B cell (primary cell): ENCODE measurements at regions of chr21 and their contacts with region 1.

Region 1: DNA sequence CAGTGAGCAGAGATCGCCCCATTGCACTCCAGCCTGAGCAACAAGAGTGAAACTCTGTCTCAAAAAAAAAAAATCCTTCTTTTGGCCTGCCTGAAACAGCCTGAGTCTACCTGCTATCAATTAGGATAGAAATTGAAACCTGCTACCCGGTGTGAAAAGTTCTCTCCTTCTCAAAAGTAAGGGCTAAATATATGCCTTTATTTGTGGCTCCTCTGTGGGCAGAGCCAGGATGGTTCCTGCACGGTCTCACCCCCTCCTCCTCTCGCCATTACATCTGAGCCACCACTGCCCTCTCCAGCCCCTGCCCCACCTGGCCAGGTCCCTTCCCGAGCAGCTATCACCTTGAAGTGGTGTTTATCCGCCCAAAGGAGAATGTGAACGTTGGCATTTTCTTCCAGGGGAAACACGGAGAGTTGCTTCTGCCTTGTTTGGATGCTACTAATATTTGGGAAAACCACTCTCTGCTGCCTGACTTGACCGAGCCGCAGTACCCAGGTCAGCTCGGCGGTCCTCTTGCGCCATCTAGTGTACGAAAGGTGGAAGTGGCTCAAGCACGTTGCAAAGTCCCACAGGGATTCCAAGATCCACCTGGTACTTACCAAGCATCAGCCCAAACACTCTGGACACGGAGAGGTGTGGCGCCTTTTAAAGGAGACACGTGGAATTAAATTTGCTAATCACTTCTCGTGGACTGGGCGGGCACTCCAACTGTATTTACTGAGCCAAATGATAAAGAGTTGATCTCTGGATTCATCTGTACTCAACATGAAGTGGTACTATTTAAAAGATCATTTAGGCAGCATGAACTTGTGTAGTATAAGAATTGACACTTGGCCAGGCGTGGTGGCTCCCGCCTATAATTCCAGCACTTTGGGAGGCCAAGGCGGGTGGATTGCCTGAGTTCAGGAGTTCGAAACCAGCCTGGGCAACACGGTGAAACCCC is 31.9 kb downstream of the SETD4 start:
- DNase-seq: peak; percentile 80
- ATAC-seq: peak; percentile 87
- H3K4me3 ChIP-seq: no peak overlapping the region
- H3K4me3 Mint-ChIP-seq: no peak overlapping the region
- H3K27ac ChIP-seq: no peak overlapping the region
- H3K27ac Mint-ChIP-seq: no peak overlapping the region
- H3K4me1 ChIP-seq: peaks cover 0 to 6% of the 10 kb centered on the region in 2 donors
- H3K4me1 Mint-ChIP-seq: peaks cover 5% of the 10 kb centered on the region
- H3K27me3 ChIP-seq: no peaks in the 10 kb centered on the region
- H3K27me3 Mint-ChIP-seq: no peaks in the 10 kb centered on the region
- CTCF ChIP-seq: peak; percentile 97

Region 2: GRCh38 chr21:34693192-34693810 is 1335.1 kb before region 1 on chr21:
- CTCF ChIA-PET with region 1: interaction called, 44 read pairs
- POLR2A ChIA-PET with region 1: no interaction called
- intact Hi-C with region 1: loop called (anchors 1 kb)
- DNase-seq: peak; percentile 70
- ATAC-seq: peak; percentile 43
- H3K4me3 ChIP-seq: no peak overlapping the region
- H3K4me3 Mint-ChIP-seq: no peak overlapping the region
- H3K27ac ChIP-seq: no peak overlapping the region
- H3K27ac Mint-ChIP-seq: no peak overlapping the region
- H3K4me1 ChIP-seq: no peaks in the 10 kb centered on the region
- H3K4me1 Mint-ChIP-seq: no peaks in the 10 kb centered on the region
- H3K27me3 ChIP-seq: peaks cover 0 to 9% (median 1%) of the 10 kb centered on the region in 4 experiments
- H3K27me3 Mint-ChIP-seq: peaks cover 20% of the 10 kb centered on the region
- CTCF ChIP-seq: peak; percentile 96

Region 3: DNA sequence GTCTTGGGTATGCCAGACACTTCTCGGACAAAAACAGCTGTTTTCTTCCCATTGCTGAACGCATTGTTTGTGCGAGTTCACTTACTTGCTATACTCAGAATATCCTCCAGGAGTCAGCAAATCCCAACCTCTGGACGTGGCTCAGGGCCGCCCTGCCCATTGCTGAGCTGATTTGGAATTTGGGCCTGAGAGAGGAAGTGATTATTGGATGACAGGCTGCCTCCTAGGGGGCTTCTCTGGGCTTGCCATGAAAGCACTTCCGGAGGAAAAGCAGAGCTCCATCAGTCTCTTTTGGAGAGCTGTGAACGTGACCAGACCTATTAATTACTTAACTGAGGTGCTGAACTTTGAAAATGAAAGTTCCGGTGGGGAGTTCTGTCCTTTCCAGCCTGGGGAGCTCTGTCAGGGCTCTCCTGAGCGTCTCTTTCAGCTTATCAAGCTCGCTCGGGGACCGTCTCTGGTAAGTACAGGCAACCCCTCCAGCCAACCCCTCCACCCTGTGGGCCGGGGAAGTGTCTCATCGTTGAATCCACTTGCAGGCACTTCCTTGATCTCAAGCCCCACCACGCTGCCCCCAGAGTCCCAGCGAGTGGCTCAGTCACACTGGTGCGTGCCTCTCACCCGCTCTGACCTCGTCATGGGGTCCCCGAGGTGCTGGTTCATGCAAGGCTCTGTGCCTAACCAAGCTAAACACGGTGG is 1282.7 kb before region 1 on chr21:
- CTCF ChIA-PET with region 1: interaction called, 58 read pairs
- POLR2A ChIA-PET with region 1: no interaction called
- intact Hi-C with region 1: no loop called
- DNase-seq: peak; percentile 76
- ATAC-seq: peak; percentile 89
- H3K4me3 ChIP-seq: peak overlapping the region in 3 of 5 experiments; percentile 14 to 41 (median 27)
- H3K4me3 Mint-ChIP-seq: peak overlapping the region; percentile 81
- H3K27ac ChIP-seq: no peak overlapping the region
- H3K27ac Mint-ChIP-seq: no peak overlapping the region
- H3K4me1 ChIP-seq: peaks cover 0 to 8% of the 10 kb centered on the region in 2 donors
- H3K4me1 Mint-ChIP-seq: peaks cover 4% of the 10 kb centered on the region
- H3K27me3 ChIP-seq: no peaks in the 10 kb centered on the region
- H3K27me3 Mint-ChIP-seq: peaks cover 25% of the 10 kb centered on the region
- CTCF ChIP-seq: peak; percentile 85

Region 4: GRCh38 chr21:34801519-34802132 is 1226.8 kb before region 1 on chr21:
- CTCF ChIA-PET with region 1: no interaction called
- POLR2A ChIA-PET with region 1: no interaction called
- intact Hi-C with region 1: loop called (anchors 5 kb)
- DNase-seq: peak; percentile 55
- ATAC-seq: peak; percentile 70
- H3K4me3 ChIP-seq: no peak overlapping the region
- H3K4me3 Mint-ChIP-seq: no peak overlapping the region
- H3K27ac ChIP-seq: peak overlapping the region in 1 of 2 donors; percentile 25
- H3K27ac Mint-ChIP-seq: no peak overlapping the region
- H3K4me1 ChIP-seq: no peaks in the 10 kb centered on the region
- H3K4me1 Mint-ChIP-seq: peaks cover 20% of the 10 kb centered on the region
- H3K27me3 ChIP-seq: no peaks in the 10 kb centered on the region
- H3K27me3 Mint-ChIP-seq: no peaks in the 10 kb centered on the region
- CTCF ChIP-seq: peak; percentile 68

Region 5: DNA sequence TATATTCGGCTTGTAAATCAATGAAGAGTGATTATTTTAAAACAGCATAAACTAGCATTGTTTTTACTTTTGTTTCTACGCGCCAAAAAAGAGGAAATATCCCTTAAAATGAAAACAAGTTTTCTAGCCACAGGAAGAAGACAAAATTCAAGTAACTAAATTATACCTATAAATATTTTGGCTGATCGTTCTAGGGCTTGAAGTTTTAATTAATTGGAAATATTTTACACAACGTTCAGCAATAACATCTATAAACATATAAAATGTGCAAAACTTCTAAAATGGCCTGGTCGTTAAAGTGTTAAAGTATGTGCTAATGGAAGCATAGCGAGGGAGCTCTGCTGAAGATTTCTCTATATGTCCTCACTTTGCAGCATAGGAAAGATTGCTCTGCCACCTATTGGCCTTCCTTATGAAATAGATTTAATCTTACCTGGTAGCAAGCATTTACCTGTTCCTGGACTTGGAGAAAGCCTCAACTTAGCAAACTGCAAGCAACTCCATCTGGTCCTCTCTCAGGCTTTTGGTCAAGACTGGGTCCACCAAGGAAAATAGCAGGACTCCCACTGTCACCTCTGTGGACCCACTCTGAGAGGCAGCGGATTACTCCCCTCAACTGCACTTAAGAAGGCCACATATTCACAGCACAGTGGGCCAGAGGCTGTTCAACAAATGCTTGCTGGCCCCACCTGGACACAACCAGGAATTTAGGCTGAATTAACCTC is 628.0 kb before region 1 on chr21:
- CTCF ChIA-PET with region 1: interaction called, 3 read pairs
- POLR2A ChIA-PET with region 1: no interaction called
- intact Hi-C with region 1: loop called (anchors 10 kb)
- DNase-seq: peak; percentile 77
- ATAC-seq: peak; percentile 80
- H3K4me3 ChIP-seq: no peak overlapping the region
- H3K4me3 Mint-ChIP-seq: no peak overlapping the region
- H3K27ac ChIP-seq: no peak overlapping the region
- H3K27ac Mint-ChIP-seq: no peak overlapping the region
- H3K4me1 ChIP-seq: no peaks in the 10 kb centered on the region
- H3K4me1 Mint-ChIP-seq: peaks cover 2% of the 10 kb centered on the region
- H3K27me3 ChIP-seq: peaks cover 0 to 5% (median under 1%) of the 10 kb centered on the region in 4 experiments
- H3K27me3 Mint-ChIP-seq: peaks cover 4% of the 10 kb centered on the region
- CTCF ChIP-seq: peak; percentile 77

Region 6: GRCh38 chr21:35932232-35932911 is 96.0 kb before region 1 on chr21:
- CTCF ChIA-PET with region 1: interaction called, 4 read pairs
- POLR2A ChIA-PET with region 1: no interaction called
- intact Hi-C with region 1: loop called (anchors 10 kb)
- DNase-seq: peak; percentile 85
- ATAC-seq: peak; percentile 91
- H3K4me3 ChIP-seq: no peak overlapping the region
- H3K4me3 Mint-ChIP-seq: no peak overlapping the region
- H3K27ac ChIP-seq: peak overlapping the region; percentile 24 to 49
- H3K27ac Mint-ChIP-seq: no peak overlapping the region
- H3K4me1 ChIP-seq: peaks cover 14 to 17% of the 10 kb centered on the region in 2 donors
- H3K4me1 Mint-ChIP-seq: no peaks in the 10 kb centered on the region
- H3K27me3 ChIP-seq: no peaks in the 10 kb centered on the region
- H3K27me3 Mint-ChIP-seq: peaks cover 1% of the 10 kb centered on the region
- CTCF ChIP-seq: no peak

Region 7: GRCh38 chr21:36005018-36005417 is 23.4 kb before region 1 on chr21:
- CTCF ChIA-PET with region 1: no interaction called
- POLR2A ChIA-PET with region 1: no interaction called
- intact Hi-C with region 1: no loop called
- DNase-seq: no peak
- ATAC-seq: no peak
- H3K4me3 ChIP-seq: no peak overlapping the region
- H3K4me3 Mint-ChIP-seq: no peak overlapping the region
- H3K27ac ChIP-seq: no peak overlapping the region
- H3K27ac Mint-ChIP-seq: no peak overlapping the region
- H3K4me1 ChIP-seq: no peaks in the 10 kb centered on the region
- H3K4me1 Mint-ChIP-seq: no peaks in the 10 kb centered on the region
- H3K27me3 ChIP-seq: peaks cover 0 to 7% (median 0%) of the 10 kb centered on the region in 4 experiments
- H3K27me3 Mint-ChIP-seq: peaks cover 25% of the 10 kb centered on the region
- CTCF ChIP-seq: no peak

Region 8: GRCh38 chr21:36038701-36039497 is 10.5 kb after region 1 on chr21:
- CTCF ChIA-PET with region 1: interaction called, 10 read pairs
- POLR2A ChIA-PET with region 1: no interaction called
- intact Hi-C with region 1: no loop called
- DNase-seq: no peak
- ATAC-seq: no peak
- H3K4me3 ChIP-seq: no peak overlapping the region
- H3K4me3 Mint-ChIP-seq: no peak overlapping the region
- H3K27ac ChIP-seq: no peak overlapping the region
- H3K27ac Mint-ChIP-seq: no peak overlapping the region
- H3K4me1 ChIP-seq: no peaks in the 10 kb centered on the region
- H3K4me1 Mint-ChIP-seq: no peaks in the 10 kb centered on the region
- H3K27me3 ChIP-seq: no peaks in the 10 kb centered on the region
- H3K27me3 Mint-ChIP-seq: no peaks in the 10 kb centered on the region
- CTCF ChIP-seq: no peak